A549 (cell line): ENCODE measurements at regions of chr16 and their contacts with region 1.

Region 1: GRCh38 chr16:89556750-89557689 is 3.5 kb upstream of the RPL13 start:
- DNase-seq: peak; percentile 78 to 86
- ATAC-seq: peak; percentile 68 to 70
- H3K4me3 ChIP-seq: no peak overlapping the region
- H3K27ac ChIP-seq: no peak overlapping the region
- H3K4me1 ChIP-seq: peaks cover 18% of the 10 kb centered on the region
- CTCF ChIP-seq: peak; percentile 77
- EP300 ChIP-seq: no peak
- POLR2A ChIP-seq: no peak
- RAD21 ChIP-seq: peak; percentile 47 to 60

Region 2: DNA sequence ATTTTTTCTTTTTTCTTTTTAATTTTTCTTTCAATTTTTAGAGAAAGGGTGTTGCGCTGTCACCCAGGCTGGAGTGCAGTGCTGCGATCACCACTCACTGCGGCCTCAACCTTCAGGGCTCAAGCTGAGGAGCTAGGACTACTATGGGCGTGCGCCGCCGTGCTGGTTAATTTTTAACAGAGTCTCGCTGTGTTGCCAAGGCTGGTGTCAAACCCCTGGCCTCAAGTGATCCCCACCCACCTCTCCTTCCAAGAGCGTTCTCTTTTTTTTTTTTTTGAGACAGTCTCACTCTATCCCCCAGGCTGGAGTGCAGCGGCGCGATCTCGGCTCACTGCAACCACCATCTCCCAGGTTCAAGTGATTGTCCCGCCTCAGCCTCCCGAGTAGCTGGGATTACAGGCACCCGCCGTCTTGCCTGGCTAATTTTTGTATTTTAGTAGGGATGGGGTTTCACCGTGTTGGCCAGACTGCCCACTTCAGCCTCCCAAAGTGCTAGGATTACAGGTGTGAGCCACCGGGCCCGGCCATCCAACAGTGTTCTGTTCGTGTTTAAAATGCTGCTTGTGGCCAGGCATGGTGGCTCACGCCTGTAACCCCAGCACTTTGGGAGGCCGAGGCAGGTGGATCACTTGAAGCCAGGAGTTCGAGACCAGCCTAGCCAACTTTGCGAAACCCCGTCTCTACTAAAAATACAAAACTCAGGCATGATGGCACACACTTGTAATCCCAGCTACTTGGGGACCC is 11.0 kb before region 1 on chr16:
- CTCF ChIA-PET with region 1: interaction called, 41 read pairs
- POLR2A ChIA-PET with region 1: no interaction called
- DNase-seq: no peak
- ATAC-seq: no peak
- H3K4me3 ChIP-seq: no peak overlapping the region
- H3K27ac ChIP-seq: no peak overlapping the region
- H3K4me1 ChIP-seq: no peaks in the 10 kb centered on the region
- CTCF ChIP-seq: no peak
- EP300 ChIP-seq: no peak
- POLR2A ChIP-seq: no peak
- RAD21 ChIP-seq: no peak